ENCODE measurements at regions of chr19 and their contacts with region 1.

Region 1: DNA sequence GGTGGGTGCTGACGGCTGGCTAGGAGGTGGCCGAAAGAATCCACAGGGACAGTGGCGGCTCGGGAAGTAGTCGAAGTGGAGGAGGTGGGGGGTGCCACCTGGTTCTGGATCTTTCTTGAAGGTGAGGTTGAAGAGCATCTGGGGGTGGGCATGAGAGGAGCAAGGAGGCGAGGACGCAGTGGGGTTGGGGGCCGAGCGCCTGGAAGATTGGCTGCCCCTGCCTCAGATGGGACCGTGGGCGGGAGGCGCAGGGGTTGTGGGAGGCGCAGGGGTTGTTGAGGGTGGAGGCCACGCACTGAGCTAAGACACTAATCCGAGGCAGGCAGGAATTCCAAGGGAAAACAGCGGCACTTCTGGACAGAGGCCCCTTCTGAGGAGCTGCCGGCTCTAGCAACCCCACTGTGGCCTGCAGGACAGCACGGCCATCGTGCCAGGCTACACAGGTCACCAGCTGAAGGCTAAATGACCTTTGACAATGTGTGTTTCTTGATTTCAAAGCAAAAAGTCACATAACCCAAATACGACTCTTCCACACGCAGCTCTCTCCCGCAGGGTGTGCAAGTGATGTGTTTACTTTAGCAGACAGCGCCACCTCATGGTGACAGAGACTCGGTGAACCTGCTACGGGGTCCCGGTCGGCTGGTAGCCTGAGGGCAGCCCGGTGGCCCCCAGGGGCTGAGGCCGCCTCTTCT is 44.1 kb upstream of the RANBP3 start:
- DNase-seq: peak; percentile 85
- H3K4me3 ChIP-seq: no peak overlapping the region
- H3K27ac ChIP-seq: peak overlapping the region; percentile 84 to 90
- H3K4me1 ChIP-seq: peaks cover 17% of the 10 kb centered on the region
- H3K27me3 ChIP-seq: no peaks in the 10 kb centered on the region
- CTCF ChIP-seq: peak; percentile 75 to 98 (median 91)
- POLR2A ChIP-seq: no peak

Region 2: DNA sequence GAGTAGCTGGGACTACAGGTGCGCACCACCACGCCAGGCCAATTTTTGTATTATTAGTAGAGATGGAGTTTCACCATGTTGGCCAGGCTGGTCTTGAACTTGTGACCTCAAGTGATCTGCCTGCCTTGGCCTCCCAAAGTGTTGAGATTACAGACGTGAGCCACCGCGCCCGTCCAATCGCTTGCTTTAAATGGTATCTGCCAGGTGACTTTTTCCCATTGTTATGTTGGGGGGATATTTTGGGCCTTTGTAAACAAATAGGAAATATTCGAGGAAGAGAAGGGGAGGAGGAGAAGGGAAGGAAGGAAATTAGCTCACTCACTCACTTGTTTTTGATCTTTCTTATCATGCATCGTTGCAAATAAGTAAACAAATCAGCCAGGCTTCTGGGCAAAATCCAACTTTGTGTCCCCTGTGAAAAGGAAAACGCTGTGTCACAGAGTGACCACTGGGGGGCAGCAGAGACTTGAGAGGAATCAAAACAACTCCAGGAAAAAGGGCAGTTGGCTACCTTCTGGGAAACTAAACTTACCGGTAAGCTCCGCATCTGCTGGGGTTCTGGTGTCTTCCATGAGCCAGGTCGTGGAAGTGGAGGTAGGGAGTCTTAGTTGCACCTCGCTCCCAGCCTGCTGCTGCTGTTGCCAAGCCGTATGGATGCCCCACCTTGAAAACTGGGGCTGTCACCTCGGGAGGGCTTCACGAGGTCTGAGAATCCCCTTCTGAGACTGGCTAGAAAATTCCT is 34.8 kb before region 1 on chr19:
- intact Hi-C with region 1: loop called (anchors 2 kb)
- DNase-seq: peak; percentile 84
- H3K4me3 ChIP-seq: peak overlapping the region in 1 of 2 donors; percentile 16
- H3K27ac ChIP-seq: peak overlapping the region; percentile 20 to 33
- H3K4me1 ChIP-seq: peaks cover 8% of the 10 kb centered on the region
- H3K27me3 ChIP-seq: no peaks in the 10 kb centered on the region
- CTCF ChIP-seq: peak; percentile 92 to 98 (median 96)
- POLR2A ChIP-seq: no peak

Measured in prostate gland (tissue), 2 donors.